Caco-2 (cell line): ENCODE measurements at regions of chr5 and their contacts with region 1.

Region 1: GRCh38 chr5:134738133-134738962 is at the start of gene CAMLG:
- DNase-seq: peak; percentile 98 to 99
- H3K4me3 ChIP-seq: peak within 1 kb of the TSS; percentile 69
- H3K4me3 Mint-ChIP-seq: peak within 1 kb of the TSS; percentile 99
- H3K27ac Mint-ChIP-seq: peak within 1 kb of the TSS; percentile 91
- H3K4me1 ChIP-seq: no peaks in the 10 kb centered on the region
- H3K4me1 Mint-ChIP-seq: no peaks in the 10 kb centered on the region
- H3K27me3 ChIP-seq: no peaks in the 10 kb centered on the region
- H3K27me3 Mint-ChIP-seq: no peaks in the 10 kb centered on the region
- CTCF ChIP-seq: peak; percentile 83 to 88
- total RNA-seq, gene CAMLG: 26.6 and 30.9 TPM in 2 replicates

Region 2: GRCh38 chr5:134176511-134177368 is 561.6 kb before region 1 on chr5 and contains the start of gene SKP1:
- CTCF ChIA-PET with region 1: no interaction called
- POLR2A ChIA-PET with region 1: no interaction called
- intact Hi-C with region 1: loop called (anchors 10 kb)
- DNase-seq: peak; percentile 83 to 91
- H3K4me3 ChIP-seq: peak within 1 kb of the TSS; percentile 97
- H3K4me3 Mint-ChIP-seq: peak within 1 kb of the TSS; percentile 93
- H3K27ac Mint-ChIP-seq: peak within 1 kb of the TSS; percentile 98
- H3K4me1 ChIP-seq: peaks cover 8% of the 10 kb centered on the region; the same call in 1 of the 2 replicates
- H3K4me1 Mint-ChIP-seq: peaks cover 8% of the 10 kb centered on the region
- H3K27me3 ChIP-seq: no peaks in the 10 kb centered on the region
- H3K27me3 Mint-ChIP-seq: no peaks in the 10 kb centered on the region
- CTCF ChIP-seq: no peak
- total RNA-seq, gene SKP1: 351 and 365 TPM in 2 replicates

Region 3: DNA sequence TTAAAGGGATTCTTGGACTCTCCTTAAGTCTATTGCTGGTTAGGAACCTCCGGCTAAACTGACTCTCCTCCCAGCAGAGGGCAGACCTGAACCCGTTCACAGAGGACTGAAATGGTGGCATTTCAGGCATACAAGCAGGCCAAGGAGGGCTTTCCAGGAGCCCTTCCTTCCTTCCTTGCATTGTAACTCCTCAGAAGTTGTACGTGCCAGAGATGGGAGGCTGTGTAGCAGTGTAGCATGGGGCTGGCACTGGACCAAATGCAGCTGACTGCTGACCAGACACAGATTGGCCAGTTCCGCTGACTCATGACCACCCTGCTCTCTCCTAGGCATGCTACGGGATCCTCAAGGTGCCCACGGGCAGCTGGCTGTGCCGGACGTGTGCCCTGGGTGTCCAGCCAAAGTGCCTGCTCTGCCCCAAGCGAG is 176.5 kb before region 1 on chr5:
- CTCF ChIA-PET with region 1: no interaction called
- POLR2A ChIA-PET with region 1: no interaction called
- intact Hi-C with region 1: loop called (anchors 1 kb)
- DNase-seq: peak in 1 of 2 experiments; percentile 37
- H3K4me3 ChIP-seq: no peak overlapping the region
- H3K4me3 Mint-ChIP-seq: no peak overlapping the region
- H3K27ac Mint-ChIP-seq: peak overlapping the region; percentile 29
- H3K4me1 ChIP-seq: no peaks in the 10 kb centered on the region
- H3K4me1 Mint-ChIP-seq: no peaks in the 10 kb centered on the region
- H3K27me3 ChIP-seq: no peaks in the 10 kb centered on the region
- H3K27me3 Mint-ChIP-seq: no peaks in the 10 kb centered on the region
- CTCF ChIP-seq: no peak

Region 4: DNA sequence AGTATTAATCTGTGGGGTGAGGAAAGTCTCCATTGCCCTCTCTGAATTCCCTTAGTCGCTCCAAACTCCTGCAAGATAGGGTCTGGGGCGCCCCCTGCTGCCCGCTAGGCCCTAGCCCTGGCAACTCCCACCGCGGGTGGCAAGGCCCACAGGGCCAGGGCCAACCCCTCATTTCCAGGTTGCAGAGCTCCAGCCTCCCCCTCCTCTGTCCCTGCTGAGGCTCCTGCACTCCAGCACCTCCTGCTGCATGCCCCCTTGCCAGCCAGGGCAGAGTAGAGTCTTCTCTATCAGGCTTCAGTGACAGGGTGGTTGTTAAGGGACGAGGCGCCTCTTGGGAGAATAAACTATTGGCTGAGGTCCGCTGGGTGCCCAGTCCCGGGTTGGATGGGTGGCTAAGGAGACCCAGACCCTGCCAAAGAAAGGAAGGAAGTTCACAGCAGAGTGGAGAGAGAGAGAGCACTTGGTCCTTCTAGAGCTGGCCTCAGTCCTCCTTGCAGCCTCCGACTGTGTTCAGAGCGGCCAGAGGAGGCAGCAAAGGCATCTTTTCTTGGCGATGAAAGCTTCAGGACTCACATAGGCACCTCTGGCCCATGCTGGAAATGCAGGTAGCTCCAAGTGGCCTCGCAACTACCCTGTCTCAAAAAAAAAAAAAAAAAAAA is 151.4 kb before region 1 on chr5:
- CTCF ChIA-PET with region 1: interaction called, 16 read pairs
- POLR2A ChIA-PET with region 1: no interaction called
- intact Hi-C with region 1: loop called (anchors 1 kb)
- DNase-seq: peak; percentile 85 to 86
- H3K4me3 ChIP-seq: no peak overlapping the region
- H3K4me3 Mint-ChIP-seq: no peak overlapping the region
- H3K27ac Mint-ChIP-seq: no peak overlapping the region
- H3K4me1 ChIP-seq: peaks cover 11% of the 10 kb centered on the region
- H3K4me1 Mint-ChIP-seq: peaks cover 5% of the 10 kb centered on the region
- H3K27me3 ChIP-seq: no peaks in the 10 kb centered on the region
- H3K27me3 Mint-ChIP-seq: no peaks in the 10 kb centered on the region
- CTCF ChIP-seq: peak; percentile 59 to 85

Region 5: GRCh38 chr5:134758504-134759341 is 20.4 kb after region 1 on chr5 and contains the start of gene DDX46:
- CTCF ChIA-PET with region 1: interaction called, 17 read pairs
- POLR2A ChIA-PET with region 1: interaction called, 7 read pairs
- intact Hi-C with region 1: loop called (anchors 1 kb)
- DNase-seq: peak; percentile 95 to 96
- H3K4me3 ChIP-seq: peak within 1 kb of the TSS; percentile 71
- H3K4me3 Mint-ChIP-seq: peak within 1 kb of the TSS; percentile 100
- H3K27ac Mint-ChIP-seq: peak within 1 kb of the TSS; percentile 100
- H3K4me1 ChIP-seq: peaks cover 7% of the 10 kb centered on the region; the same call in 1 of the 2 replicates
- H3K4me1 Mint-ChIP-seq: peaks cover 17% of the 10 kb centered on the region
- H3K27me3 ChIP-seq: no peaks in the 10 kb centered on the region
- H3K27me3 Mint-ChIP-seq: no peaks in the 10 kb centered on the region
- CTCF ChIP-seq: peak; percentile 71 to 87
- total RNA-seq, gene DDX46: 96.1 and 116 TPM in 2 replicates

Region 6: GRCh38 chr5:134845852-134846640 is 107.7 kb after region 1 on chr5 and contains the start of gene C5orf24:
- CTCF ChIA-PET with region 1: interaction called, 4 read pairs
- POLR2A ChIA-PET with region 1: interaction called, 8 read pairs
- intact Hi-C with region 1: loop called (anchors 2 kb)
- DNase-seq: peak; percentile 93 to 94
- H3K4me3 ChIP-seq: peak within 1 kb of the TSS; percentile 96
- H3K4me3 Mint-ChIP-seq: peak within 1 kb of the TSS; percentile 97
- H3K27ac Mint-ChIP-seq: peak within 1 kb of the TSS; percentile 97
- H3K4me1 ChIP-seq: peaks cover 13% of the 10 kb centered on the region; the same call in 1 of the 2 replicates
- H3K4me1 Mint-ChIP-seq: peaks cover 6% of the 10 kb centered on the region
- H3K27me3 ChIP-seq: no peaks in the 10 kb centered on the region
- H3K27me3 Mint-ChIP-seq: no peaks in the 10 kb centered on the region
- CTCF ChIP-seq: no peak
- total RNA-seq, gene C5orf24: 41.2 and 48.7 TPM in 2 replicates

Region 7: DNA sequence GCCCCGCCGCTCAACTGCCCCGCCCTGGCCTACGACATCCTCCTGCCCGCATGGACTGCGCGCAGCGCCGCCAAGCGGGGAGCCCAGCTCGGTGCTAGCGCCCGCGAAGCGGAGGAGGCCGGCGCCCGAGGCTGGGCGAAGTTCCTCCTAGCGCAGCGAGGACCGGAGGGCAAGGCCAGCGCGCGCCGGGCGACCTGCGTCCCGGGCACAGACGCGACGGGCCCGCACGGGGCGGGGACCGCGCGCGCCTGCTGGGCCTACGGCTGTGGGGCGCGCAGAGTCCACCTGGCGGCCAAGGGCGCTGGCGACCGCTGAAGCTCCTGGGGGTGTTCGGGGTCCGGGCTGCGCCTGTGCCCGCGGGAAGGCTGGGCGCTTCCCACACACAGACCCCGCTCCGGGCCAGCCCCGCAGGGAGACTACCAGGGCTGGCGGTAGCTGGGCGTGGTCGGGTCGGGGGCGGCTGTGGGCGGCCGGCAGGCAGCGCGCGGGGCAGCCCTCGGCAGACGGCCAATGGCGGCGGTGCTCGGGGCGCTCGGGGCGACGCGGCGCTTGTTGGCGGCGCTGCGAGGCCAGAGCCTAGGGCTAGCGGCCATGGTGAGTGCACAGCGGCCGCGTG is 166.4 kb after region 1 on chr5 and contains the start of gene PCBD2:
- CTCF ChIA-PET with region 1: interaction called, 7 read pairs
- POLR2A ChIA-PET with region 1: interaction called, 9 read pairs
- intact Hi-C with region 1: loop called (anchors 1 kb)
- DNase-seq: peak; percentile 93 to 98
- H3K4me3 ChIP-seq: peak within 1 kb of the TSS; percentile 94
- H3K4me3 Mint-ChIP-seq: peak within 1 kb of the TSS; percentile 83
- H3K27ac Mint-ChIP-seq: peak within 1 kb of the TSS; percentile 90
- H3K4me1 ChIP-seq: no peaks in the 10 kb centered on the region
- H3K4me1 Mint-ChIP-seq: no peaks in the 10 kb centered on the region
- H3K27me3 ChIP-seq: no peaks in the 10 kb centered on the region
- H3K27me3 Mint-ChIP-seq: no peaks in the 10 kb centered on the region
- CTCF ChIP-seq: peak; percentile 93 to 95
- total RNA-seq, gene PCBD2: 20.8 and 24.2 TPM in 2 replicates